Activated CD8-positive, alpha-beta T cell treated with anti-CD3 and anti-CD28 coated beads, Interleukin-2, amount 10 ng/mL, durations not matched to agents 7 days and 5 days (primary cell): ENCODE measurements at regions of chr9 and their contacts with region 1.

Region 1: GRCh38 chr9:129221233-129221632 is 43.2 kb upstream of the IER5L start:
- DNase-seq: peak; percentile 80
- ATAC-seq: peak; percentile 83
- H3K4me3 Mint-ChIP-seq: peak overlapping the region; percentile 29
- H3K27ac Mint-ChIP-seq: peak overlapping the region; percentile 81
- H3K4me1 Mint-ChIP-seq: peaks cover 70% of the 10 kb centered on the region
- H3K27me3 Mint-ChIP-seq: no peaks in the 10 kb centered on the region

Region 2: DNA sequence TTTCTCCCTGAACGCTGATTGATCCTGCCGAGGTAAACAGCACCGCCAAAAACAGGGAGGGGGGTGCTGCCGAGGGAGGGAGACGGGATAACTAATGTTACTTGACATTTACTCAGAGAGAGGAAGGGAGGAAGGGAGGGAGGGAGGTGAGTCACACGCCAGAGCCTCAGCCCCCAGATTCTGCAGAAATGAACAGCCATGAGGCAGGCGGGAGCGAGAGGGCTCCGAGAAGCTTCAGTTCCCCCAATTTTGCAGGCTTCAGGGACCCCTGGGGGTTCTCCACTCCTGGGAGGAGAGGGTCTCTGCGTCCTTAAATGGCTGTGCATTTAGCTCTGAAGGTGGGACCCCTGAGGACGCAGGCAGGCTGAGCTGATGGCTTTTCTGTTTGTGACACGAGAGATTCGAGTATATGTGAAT is 16.0 kb after region 1 on chr9:
- CTCF ChIA-PET with region 1: interaction called, 11 read pairs
- POLR2A ChIA-PET with region 1: interaction called, 6 read pairs
- DNase-seq: peak; percentile 64
- ATAC-seq: peak; percentile 59
- H3K4me3 Mint-ChIP-seq: peak overlapping the region; percentile 74
- H3K27ac Mint-ChIP-seq: peak overlapping the region; percentile 88
- H3K4me1 Mint-ChIP-seq: peaks cover 64% of the 10 kb centered on the region
- H3K27me3 Mint-ChIP-seq: no peaks in the 10 kb centered on the region

Region 3: DNA sequence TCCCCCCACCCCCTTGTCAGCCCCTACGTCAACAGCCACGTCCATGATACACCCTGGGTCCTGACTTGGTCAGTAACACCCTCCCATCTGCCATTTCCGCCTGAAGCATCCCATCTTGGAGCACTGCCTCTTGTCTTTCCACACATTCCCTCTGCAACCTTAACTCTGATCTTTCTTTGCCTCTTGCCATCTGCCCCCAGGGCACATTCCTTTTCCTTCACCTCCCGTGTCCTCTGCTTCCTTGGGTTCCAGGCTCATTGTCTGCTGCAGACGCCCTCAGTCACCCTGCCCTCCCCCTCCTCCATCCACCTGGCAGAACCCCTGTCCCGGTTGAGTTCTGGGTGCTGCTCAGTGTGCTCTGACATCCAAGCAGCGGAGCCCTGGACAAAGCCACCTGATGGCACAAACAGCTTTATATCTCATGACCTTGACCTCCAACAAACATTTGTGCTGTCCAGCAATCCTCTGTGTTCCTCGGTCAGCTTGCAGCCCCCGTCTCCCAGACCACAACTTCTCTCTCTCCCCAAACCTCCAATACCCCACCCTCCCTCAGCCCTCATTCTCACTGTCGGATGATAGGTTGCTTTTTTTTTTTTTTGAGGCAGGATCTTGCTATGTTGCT is 54.5 kb after region 1 on chr9:
- CTCF ChIA-PET with region 1: no interaction called
- POLR2A ChIA-PET with region 1: no interaction called
- DNase-seq: no peak
- ATAC-seq: no peak
- H3K4me3 Mint-ChIP-seq: no peak overlapping the region
- H3K27ac Mint-ChIP-seq: no peak overlapping the region
- H3K4me1 Mint-ChIP-seq: peaks cover 28% of the 10 kb centered on the region
- H3K27me3 Mint-ChIP-seq: peaks cover 20% of the 10 kb centered on the region